Endothelial cell of umbilical vein (primary cell): ENCODE measurements at regions of chr13 and their contacts with region 1.

Region 1: DNA sequence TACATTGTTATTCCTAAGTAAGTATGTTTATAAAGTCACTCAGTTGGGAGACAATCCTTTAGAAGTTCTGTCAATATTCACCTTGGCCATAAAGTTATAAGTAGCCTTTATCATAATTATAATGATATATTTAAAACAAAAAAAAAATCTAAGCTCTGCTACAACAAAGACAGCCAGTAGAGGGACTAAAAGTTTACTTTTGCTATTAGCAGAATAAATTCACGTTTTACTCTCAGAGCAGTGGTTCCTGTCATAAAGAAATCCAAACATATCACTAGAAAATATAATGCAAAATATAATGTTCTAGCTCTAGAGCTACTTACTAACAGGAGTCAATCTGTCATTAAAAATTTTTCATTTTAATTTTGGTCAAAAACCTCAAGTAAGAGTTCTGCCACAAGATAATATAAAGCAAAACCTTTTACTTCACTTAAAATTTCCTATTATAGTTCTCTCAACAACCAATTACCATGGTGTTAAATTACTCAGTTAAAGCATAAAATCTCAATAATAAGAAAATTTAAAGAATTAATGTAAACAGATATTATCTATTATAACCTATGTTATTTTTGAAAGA is 17.7 kb downstream of the INTS6 start:
- DNase-seq: peak; percentile 49
- H3K4me3 ChIP-seq: no peak overlapping the region
- H3K27ac ChIP-seq: no peak overlapping the region
- H3K4me1 ChIP-seq: no peaks in the 10 kb centered on the region
- H3K27me3 ChIP-seq: no peaks in the 10 kb centered on the region
- CTCF ChIP-seq: peak; percentile 19
- POLR2A ChIP-seq: no peak

Region 2: DNA sequence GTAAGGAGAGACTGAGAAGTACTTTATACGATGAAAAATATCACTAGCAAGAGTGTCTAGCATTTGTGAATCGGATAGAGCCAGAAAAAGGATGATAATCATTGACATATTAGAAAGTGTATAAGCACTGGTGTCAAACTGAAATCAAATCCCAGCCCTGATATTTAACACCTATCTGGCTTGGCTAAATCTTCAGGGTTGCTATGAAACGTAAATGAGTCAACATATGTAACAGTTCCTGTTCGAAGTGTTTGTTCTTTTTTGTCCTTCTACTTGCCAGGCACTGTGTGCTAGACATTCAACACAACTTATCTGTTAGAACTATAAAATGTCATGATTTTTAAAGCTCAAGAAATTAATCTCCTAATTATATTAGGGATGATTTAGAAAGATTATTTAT is 54.8 kb before region 1 on chr13:
- CTCF ChIA-PET with region 1: no interaction called
- POLR2A ChIA-PET with region 1: no interaction called
- dilution Hi-C with region 1: no loop called
- intact Hi-C with region 1: no loop called
- DNase-seq: peak; percentile 76
- H3K4me3 ChIP-seq: no peak overlapping the region
- H3K27ac ChIP-seq: peak overlapping the region; percentile 66
- H3K4me1 ChIP-seq: peaks cover 15% of the 10 kb centered on the region
- H3K27me3 ChIP-seq: no peaks in the 10 kb centered on the region
- CTCF ChIP-seq: no peak
- POLR2A ChIP-seq: no peak

Region 3: GRCh38 chr13:51419001-51419636 is 16.0 kb before region 1 on chr13:
- CTCF ChIA-PET with region 1: interaction called, 22 read pairs
- POLR2A ChIA-PET with region 1: no interaction called
- dilution Hi-C with region 1: no loop called
- intact Hi-C with region 1: no loop called
- DNase-seq: no peak
- H3K4me3 ChIP-seq: no peak overlapping the region
- H3K27ac ChIP-seq: no peak overlapping the region
- H3K4me1 ChIP-seq: peaks cover 12% of the 10 kb centered on the region
- H3K27me3 ChIP-seq: no peaks in the 10 kb centered on the region
- CTCF ChIP-seq: no peak
- POLR2A ChIP-seq: no peak

Region 4: DNA sequence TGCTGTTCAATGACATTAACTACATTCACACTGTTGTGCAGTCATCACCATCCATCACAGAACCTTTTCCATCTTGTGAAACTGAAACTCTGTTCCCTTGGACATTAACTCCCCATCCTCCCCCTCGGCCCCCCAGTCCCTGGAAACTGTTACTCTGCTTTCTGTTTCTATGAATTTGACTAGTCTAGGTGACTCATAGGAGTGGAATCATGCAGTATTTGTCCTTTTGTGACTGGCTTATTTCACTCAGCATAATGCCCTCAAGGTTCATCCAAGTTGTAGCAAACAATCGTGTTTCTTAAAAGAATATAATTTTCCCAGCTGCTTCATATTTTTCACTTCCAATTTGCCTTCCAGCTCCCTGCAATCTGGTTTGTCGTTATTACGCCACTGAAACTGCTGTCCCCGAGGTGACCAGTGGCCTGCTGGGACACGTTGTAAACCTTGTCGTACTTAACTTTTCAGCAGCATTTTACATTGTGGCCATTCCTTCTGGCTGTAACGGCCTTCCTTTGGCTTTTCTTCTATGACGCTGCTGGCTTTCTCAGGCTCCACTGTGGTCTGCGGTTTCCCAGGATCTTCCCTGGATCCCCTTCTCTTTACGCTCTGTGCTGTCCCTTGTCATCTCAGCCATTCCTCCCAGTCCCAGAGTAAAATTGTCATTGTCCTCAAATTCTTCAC is 294.9 kb after region 1 on chr13:
- CTCF ChIA-PET with region 1: interaction called, 11 read pairs
- POLR2A ChIA-PET with region 1: no interaction called
- dilution Hi-C with region 1: no loop called
- intact Hi-C with region 1: no loop called
- DNase-seq: peak; percentile 71
- H3K4me3 ChIP-seq: no peak overlapping the region
- H3K27ac ChIP-seq: no peak overlapping the region
- H3K4me1 ChIP-seq: peaks cover 14% of the 10 kb centered on the region
- H3K27me3 ChIP-seq: no peaks in the 10 kb centered on the region
- CTCF ChIP-seq: no peak
- POLR2A ChIP-seq: no peak

Region 5: DNA sequence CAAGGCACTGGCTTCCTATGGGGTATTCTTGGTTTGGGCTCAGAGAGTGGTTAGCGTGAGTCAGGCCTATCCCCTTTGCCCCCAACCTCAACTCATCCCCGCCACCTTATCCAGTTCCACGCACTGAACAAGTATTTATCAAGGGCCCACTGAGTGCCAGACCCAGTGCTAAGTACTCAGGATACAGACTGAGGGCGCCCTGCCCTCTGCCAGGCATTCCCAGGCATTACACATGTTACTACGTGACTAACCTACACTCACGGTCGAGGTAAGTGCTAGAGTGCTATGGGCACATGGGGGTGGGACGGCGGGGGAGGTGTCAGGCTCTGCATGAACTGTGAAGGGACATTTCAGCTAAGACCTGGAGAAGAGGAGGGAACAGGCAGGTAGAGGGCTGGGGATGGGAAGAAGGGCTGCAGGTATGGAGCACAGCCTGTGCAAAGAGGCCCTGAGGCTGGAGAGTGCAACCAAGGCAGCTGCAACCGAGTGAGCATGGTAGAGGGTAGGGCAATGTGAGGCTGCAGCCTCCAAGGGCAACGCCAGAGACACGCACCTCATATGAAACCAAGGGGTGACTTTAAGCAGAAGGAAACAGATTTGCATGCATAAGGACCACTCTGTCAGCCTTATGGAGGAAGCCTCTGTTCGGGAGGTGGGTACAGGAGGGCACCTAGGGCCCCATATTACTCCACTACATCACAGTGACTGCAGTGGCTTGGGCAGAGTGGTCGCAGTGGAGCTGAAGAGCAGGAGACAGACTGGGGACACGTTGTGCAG is 346.3 kb after region 1 on chr13:
- CTCF ChIA-PET with region 1: interaction called, 12 read pairs
- POLR2A ChIA-PET with region 1: no interaction called
- dilution Hi-C with region 1: no loop called
- intact Hi-C with region 1: no loop called
- DNase-seq: peak; percentile 39
- H3K4me3 ChIP-seq: no peak overlapping the region
- H3K27ac ChIP-seq: no peak overlapping the region
- H3K4me1 ChIP-seq: no peaks in the 10 kb centered on the region
- H3K27me3 ChIP-seq: no peaks in the 10 kb centered on the region
- CTCF ChIP-seq: peak; percentile 14 to 36
- POLR2A ChIP-seq: no peak

Region 6: GRCh38 chr13:51797664-51798488 is 362.8 kb after region 1 on chr13:
- CTCF ChIA-PET with region 1: interaction called, 61 read pairs
- POLR2A ChIA-PET with region 1: no interaction called
- dilution Hi-C with region 1: no loop called
- intact Hi-C with region 1: loop called (anchors 2 kb)
- DNase-seq: peak; percentile 36
- H3K4me3 ChIP-seq: no peak overlapping the region
- H3K27ac ChIP-seq: no peak overlapping the region
- H3K4me1 ChIP-seq: peaks cover 24% of the 10 kb centered on the region
- H3K27me3 ChIP-seq: no peaks in the 10 kb centered on the region
- CTCF ChIP-seq: peak; percentile 16 to 27
- POLR2A ChIP-seq: no peak